Endothelial cell of umbilical vein (primary cell): ENCODE measurements at regions of chr4 and their contacts with region 1.

Region 1: DNA sequence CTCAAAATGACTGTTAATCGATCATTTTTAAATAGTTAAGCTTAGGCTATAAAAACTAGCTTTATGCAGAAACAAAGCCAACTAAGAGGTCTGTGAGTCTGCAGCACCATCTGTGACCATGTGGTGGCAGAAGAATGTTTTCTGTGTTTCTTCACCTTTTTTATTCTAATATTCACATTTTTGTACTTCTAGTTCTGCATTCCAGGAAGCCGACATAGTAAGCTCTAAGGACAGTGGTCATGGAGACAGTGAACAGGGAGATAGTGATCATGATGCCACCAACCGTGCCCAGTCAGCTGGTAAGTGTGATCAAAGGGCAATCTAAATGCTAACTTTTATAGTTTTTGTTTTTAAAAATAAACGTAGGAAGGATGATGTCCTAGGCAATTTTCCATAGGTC is 5.6 kb downstream of the PCDH10 start:
- DNase-seq: peak; percentile 65
- H3K4me3 ChIP-seq: peak overlapping the region in 1 of 3 experiments; percentile 11
- H3K27ac ChIP-seq: no peak overlapping the region
- H3K4me1 ChIP-seq: peaks cover 22% of the 10 kb centered on the region
- H3K27me3 ChIP-seq: no peaks in the 10 kb centered on the region
- CTCF ChIP-seq: peak; percentile 53 to 58
- POLR2A ChIP-seq: no peak

Region 2: GRCh38 chr4:132276185-132276584 is 878.5 kb before region 1 on chr4:
- CTCF ChIA-PET with region 1: no interaction called
- POLR2A ChIA-PET with region 1: no interaction called
- dilution Hi-C with region 1: no loop called
- intact Hi-C with region 1: no loop called
- DNase-seq: no peak
- H3K4me3 ChIP-seq: no peak overlapping the region
- H3K27ac ChIP-seq: no peak overlapping the region
- H3K4me1 ChIP-seq: no peaks in the 10 kb centered on the region
- H3K27me3 ChIP-seq: no peaks in the 10 kb centered on the region
- CTCF ChIP-seq: no peak
- POLR2A ChIP-seq: no peak

Region 3: DNA sequence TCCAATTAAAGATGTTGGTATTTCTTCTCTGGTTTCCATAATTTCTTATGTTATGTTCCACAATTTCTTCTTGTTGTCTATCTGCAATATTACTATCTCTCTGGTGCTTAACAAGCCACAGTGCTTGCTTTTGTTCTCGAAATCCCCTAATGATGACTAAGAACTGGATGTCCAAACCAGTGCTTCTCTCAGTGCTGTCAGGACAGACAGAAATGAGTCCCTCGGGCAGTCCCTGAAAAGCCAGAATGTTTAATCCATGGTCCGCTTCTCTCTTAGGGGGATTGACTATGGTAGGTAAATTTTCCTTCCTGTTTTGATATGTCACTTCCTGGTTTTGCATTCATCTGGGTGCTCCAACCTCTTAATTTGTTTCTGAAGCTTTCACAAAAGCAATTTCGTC is 327.2 kb before region 1 on chr4:
- CTCF ChIA-PET with region 1: no interaction called
- POLR2A ChIA-PET with region 1: no interaction called
- dilution Hi-C with region 1: no loop called
- intact Hi-C with region 1: no loop called
- DNase-seq: no peak
- H3K4me3 ChIP-seq: no peak overlapping the region
- H3K27ac ChIP-seq: no peak overlapping the region
- H3K4me1 ChIP-seq: no peaks in the 10 kb centered on the region
- H3K27me3 ChIP-seq: no peaks in the 10 kb centered on the region
- CTCF ChIP-seq: no peak
- POLR2A ChIP-seq: no peak

Region 4: DNA sequence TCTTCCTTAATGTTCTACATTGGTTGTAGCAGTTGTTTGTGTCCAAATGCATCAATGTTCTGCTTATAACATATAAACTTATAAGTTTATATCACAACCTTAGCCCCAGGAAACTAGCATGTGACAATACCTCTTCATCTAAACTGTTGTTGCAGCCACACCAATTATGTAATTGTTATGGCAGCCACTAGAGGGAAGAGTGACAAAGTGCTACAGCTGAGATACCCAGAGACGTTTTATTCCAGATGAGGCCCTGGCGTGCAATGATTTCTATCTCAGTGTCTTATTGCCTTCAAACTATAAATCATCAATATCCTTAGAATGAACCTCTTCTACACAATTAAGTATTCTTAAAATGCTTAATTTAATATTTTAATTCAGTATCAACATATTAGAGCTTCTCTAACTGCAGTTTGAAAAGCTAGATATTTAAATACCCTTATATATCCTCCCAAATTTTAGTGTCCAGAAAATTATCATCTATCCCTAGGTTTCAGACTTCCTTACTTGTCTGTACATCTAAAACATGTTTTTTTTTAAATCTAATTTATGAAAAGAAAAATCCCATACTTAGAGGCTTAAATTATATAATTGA is 165.9 kb after region 1 on chr4:
- CTCF ChIA-PET with region 1: interaction called, 21 read pairs
- POLR2A ChIA-PET with region 1: no interaction called
- dilution Hi-C with region 1: no loop called
- intact Hi-C with region 1: loop called (anchors 5 kb)
- DNase-seq: peak; percentile 51
- H3K4me3 ChIP-seq: no peak overlapping the region
- H3K27ac ChIP-seq: no peak overlapping the region
- H3K4me1 ChIP-seq: no peaks in the 10 kb centered on the region
- H3K27me3 ChIP-seq: no peaks in the 10 kb centered on the region
- CTCF ChIP-seq: peak; percentile 54 to 63
- POLR2A ChIP-seq: no peak

Region 5: GRCh38 chr4:133839326-133839725 is 684.6 kb after region 1 on chr4:
- CTCF ChIA-PET with region 1: interaction called, 21 read pairs
- POLR2A ChIA-PET with region 1: no interaction called
- dilution Hi-C with region 1: no loop called
- intact Hi-C with region 1: loop called (anchors 1 kb)
- DNase-seq: no peak
- H3K4me3 ChIP-seq: no peak overlapping the region
- H3K27ac ChIP-seq: no peak overlapping the region
- H3K4me1 ChIP-seq: no peaks in the 10 kb centered on the region
- H3K27me3 ChIP-seq: no peaks in the 10 kb centered on the region
- CTCF ChIP-seq: no peak
- POLR2A ChIP-seq: no peak

Region 6: DNA sequence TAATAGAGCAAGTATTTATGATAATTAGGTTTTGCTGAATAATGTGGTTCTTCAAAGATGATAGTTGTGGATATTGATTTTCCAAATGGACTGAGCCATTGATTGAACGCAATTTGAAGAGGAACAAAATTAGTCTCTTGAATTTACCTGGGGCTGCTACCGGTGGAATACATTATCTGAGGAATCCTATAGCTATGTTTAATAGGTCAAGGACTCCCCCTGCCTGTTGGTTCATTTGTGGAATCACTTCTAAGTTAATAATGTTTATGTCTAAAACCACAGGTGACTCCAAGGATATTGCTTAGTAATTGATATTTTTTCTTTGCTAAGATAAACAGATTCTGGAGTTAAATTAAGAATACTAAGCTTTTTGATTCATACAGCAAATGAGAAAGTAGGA is 1622.9 kb after region 1 on chr4:
- CTCF ChIA-PET with region 1: interaction called, 53 read pairs
- POLR2A ChIA-PET with region 1: no interaction called
- dilution Hi-C with region 1: no loop called
- intact Hi-C with region 1: no loop called
- DNase-seq: peak; percentile 64
- H3K4me3 ChIP-seq: no peak overlapping the region
- H3K27ac ChIP-seq: no peak overlapping the region
- H3K4me1 ChIP-seq: peaks cover 2% of the 10 kb centered on the region
- H3K27me3 ChIP-seq: no peaks in the 10 kb centered on the region
- CTCF ChIP-seq: peak in 1 of 2 donors; percentile 13
- POLR2A ChIP-seq: no peak

Region 7: DNA sequence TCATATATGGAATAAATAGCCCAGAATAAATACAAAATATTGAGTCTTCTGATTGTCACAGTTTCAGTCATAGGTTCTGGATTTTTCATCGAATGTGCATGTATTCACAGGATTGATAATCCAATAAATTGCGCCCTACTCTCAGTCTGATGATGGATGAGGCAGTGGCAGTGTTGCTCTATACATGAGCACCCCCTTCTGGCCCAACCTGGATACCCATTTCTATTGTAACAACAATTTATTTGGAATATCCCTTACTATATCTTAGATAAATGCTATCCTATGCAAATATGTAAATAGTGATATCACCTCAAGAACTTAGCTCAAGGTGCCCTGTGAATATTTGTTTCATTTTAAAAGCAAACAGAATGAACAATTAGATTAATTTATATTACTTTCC is 1780.6 kb after region 1 on chr4:
- CTCF ChIA-PET with region 1: interaction called, 10 read pairs
- POLR2A ChIA-PET with region 1: no interaction called
- dilution Hi-C with region 1: no loop called
- intact Hi-C with region 1: loop called (anchors 1 kb)
- DNase-seq: peak; percentile 49
- H3K4me3 ChIP-seq: no peak overlapping the region
- H3K27ac ChIP-seq: no peak overlapping the region
- H3K4me1 ChIP-seq: no peaks in the 10 kb centered on the region
- H3K27me3 ChIP-seq: no peaks in the 10 kb centered on the region
- CTCF ChIP-seq: peak in 1 of 2 donors; percentile 47
- POLR2A ChIP-seq: no peak